ENCODE measurements at regions of chr14 and their contacts with region 1.

Region 1: GRCh38 chr14:102758087-102758486 is 19.2 kb upstream of the TRAF3 start:
- DNase-seq: no peak
- H3K4me3 ChIP-seq: no peak overlapping the region
- H3K27ac ChIP-seq: no peak overlapping the region
- H3K4me1 ChIP-seq: no peaks in the 10 kb centered on the region
- H3K27me3 ChIP-seq: no peaks in the 10 kb centered on the region
- CTCF ChIP-seq: no peak

Region 2: GRCh38 chr14:102724776-102725175 is 33.3 kb before region 1 on chr14:
- CTCF ChIA-PET with region 1: no interaction called
- POLR2A ChIA-PET with region 1: interaction called, 14 read pairs
- intact Hi-C with region 1: no loop called
- DNase-seq: no peak
- H3K4me3 ChIP-seq: no peak overlapping the region
- H3K27ac ChIP-seq: no peak overlapping the region
- H3K4me1 ChIP-seq: no peaks in the 10 kb centered on the region
- H3K27me3 ChIP-seq: no peaks in the 10 kb centered on the region
- CTCF ChIP-seq: no peak